PC-3 (cell line): ENCODE measurements at regions of chr10 and their contacts with region 1.

Region 1: DNA sequence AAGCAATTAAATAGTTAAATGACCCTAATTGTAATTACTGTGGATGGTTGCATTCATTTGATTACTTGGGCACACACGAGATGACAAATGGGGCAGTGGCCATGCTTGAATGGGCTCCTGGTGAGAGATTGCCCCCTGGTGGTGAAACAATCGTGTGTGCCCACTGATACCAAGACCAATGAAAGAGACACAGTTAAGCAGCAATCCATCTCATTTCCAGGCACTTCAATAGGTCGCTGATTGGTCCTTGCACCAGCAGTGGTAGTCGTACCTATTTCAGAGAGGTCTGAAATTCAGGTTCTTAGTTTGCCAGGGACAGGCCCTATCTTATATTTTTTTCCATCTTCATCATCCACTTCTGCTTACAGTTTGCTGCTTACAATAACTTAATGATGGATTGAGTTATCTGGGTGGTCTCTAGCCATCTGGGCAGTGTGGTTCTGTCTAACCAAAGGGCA is 8.3 kb downstream of the PCBD1 start:
- DNase-seq: peak; percentile 95
- ATAC-seq: peak; percentile 91
- H3K4me3 ChIP-seq: no peak overlapping the region
- H3K27ac ChIP-seq: no peak overlapping the region
- H3K4me1 ChIP-seq: peaks cover 16% of the 10 kb centered on the region
- H3K27me3 ChIP-seq: no peaks in the 10 kb centered on the region
- CTCF ChIP-seq: peak; percentile 100

Region 2: GRCh38 chr10:70549962-70550458 is 330.1 kb before region 1 on chr10:
- CTCF ChIA-PET with region 1: no interaction called
- POLR2A ChIA-PET with region 1: no interaction called
- intact Hi-C with region 1: loop called (anchors 1 kb)
- DNase-seq: peak; percentile 91
- ATAC-seq: peak; percentile 95
- H3K4me3 ChIP-seq: no peak overlapping the region
- H3K27ac ChIP-seq: no peak overlapping the region
- H3K4me1 ChIP-seq: no peaks in the 10 kb centered on the region
- H3K27me3 ChIP-seq: no peaks in the 10 kb centered on the region
- CTCF ChIP-seq: peak; percentile 99

Region 3: DNA sequence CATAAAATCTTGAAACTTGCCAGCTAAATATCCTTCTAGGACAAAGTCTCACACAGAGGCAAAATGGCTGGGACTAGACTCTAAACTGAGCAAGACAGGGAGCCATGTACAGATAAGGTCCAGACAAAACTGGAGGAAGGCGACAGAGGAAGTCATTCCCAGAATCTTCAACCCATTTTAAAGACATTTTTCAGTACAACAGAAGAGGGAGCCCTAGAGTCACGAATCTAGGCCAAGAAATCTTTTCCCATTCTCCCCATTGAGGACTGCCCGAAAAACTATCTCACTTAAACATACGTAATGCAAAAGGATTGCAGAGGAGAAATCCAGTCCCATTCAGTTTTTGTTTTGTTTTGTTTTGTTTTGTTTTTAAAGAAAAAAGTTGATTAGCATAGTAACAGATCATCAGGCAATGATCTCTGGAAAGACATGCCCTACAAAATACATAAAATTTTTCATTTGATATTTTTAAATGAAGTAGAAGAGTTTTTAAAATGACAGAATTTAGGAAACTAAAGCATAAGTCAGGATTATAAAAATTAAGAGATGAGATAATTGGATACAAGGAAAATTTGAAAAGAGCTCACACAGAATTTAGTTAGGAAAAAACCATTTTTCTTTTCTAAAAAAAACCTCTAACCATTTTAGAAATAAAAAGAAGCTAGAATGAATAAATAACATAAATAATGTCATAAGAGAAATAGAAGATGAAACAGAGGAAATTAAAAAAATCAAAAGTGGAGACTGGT is 260.7 kb before region 1 on chr10:
- CTCF ChIA-PET with region 1: no interaction called
- POLR2A ChIA-PET with region 1: no interaction called
- intact Hi-C with region 1: loop called (anchors 2 kb)
- DNase-seq: peak; percentile 80
- ATAC-seq: no peak
- H3K4me3 ChIP-seq: no peak overlapping the region
- H3K27ac ChIP-seq: no peak overlapping the region
- H3K4me1 ChIP-seq: peaks cover 36% of the 10 kb centered on the region
- H3K27me3 ChIP-seq: no peaks in the 10 kb centered on the region
- CTCF ChIP-seq: peak; percentile 90

Region 4: GRCh38 chr10:70815504-70816219 is 64.4 kb before region 1 on chr10 and contains the start of gene SGPL1:
- CTCF ChIA-PET with region 1: interaction called, 7 read pairs
- POLR2A ChIA-PET with region 1: no interaction called
- intact Hi-C with region 1: loop called (anchors 1 kb)
- DNase-seq: peak; percentile 98
- ATAC-seq: peak; percentile 63
- H3K4me3 ChIP-seq: peak within 1 kb of the TSS; percentile 89
- H3K27ac ChIP-seq: peak within 1 kb of the TSS; percentile 82
- H3K4me1 ChIP-seq: peaks cover 21% of the 10 kb centered on the region
- H3K27me3 ChIP-seq: no peaks in the 10 kb centered on the region
- CTCF ChIP-seq: peak; percentile 98
- total RNA-seq, gene SGPL1: 77.6 and 101 TPM in 2 replicates

Region 5: DNA sequence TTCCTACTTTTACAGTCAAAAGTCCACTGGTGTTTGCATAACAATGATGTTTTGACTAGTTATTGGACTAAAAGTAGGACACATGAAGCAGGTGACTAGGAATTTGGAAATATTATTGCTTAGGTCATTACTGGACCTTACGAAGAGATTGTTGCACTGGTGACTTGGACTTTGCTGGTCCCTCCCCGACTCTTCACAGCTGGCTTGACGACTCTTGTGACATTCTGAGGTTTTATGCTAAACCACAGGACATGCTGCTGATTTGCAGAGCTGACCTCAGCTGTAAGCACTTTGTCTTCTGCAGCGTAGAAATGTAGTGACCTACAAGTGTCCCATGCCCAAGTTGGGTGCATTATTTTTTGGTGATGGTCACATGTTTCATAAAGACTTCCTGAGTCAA is 13.7 kb before region 1 on chr10:
- CTCF ChIA-PET with region 1: no interaction called
- POLR2A ChIA-PET with region 1: no interaction called
- intact Hi-C with region 1: loop called (anchors 2 kb)
- DNase-seq: peak; percentile 89
- ATAC-seq: peak; percentile 63
- H3K4me3 ChIP-seq: peak overlapping the region; percentile 51
- H3K27ac ChIP-seq: peak overlapping the region; percentile 89
- H3K4me1 ChIP-seq: peaks cover 35% of the 10 kb centered on the region
- H3K27me3 ChIP-seq: no peaks in the 10 kb centered on the region
- CTCF ChIP-seq: no peak